AG04449 (cell line): ENCODE measurements at regions of chr1 and their contacts with region 1.

Region 1: DNA sequence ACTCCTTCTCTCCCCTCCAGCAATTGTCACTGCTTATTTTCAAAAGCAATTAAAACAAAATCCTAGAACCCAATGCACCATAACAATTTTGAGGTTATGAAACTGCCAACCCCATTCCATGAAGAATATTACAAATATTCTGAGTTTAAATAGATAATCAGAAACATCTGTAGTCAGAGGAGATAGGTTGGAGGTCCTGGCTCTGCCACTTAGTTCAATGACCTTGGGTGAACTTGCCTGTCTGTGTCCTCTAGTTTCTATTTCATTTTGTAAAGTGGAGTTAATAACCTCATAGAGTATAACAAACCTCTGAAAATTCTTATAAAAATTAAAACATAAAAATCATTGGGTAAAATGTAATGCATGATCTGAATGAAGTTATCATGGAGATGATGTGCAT is 164.6 kb downstream of the KCTD3 start:
- DNase-seq: no peak
- H3K4me3 ChIP-seq: no peak overlapping the region
- CTCF ChIP-seq: no peak

Region 2: DNA sequence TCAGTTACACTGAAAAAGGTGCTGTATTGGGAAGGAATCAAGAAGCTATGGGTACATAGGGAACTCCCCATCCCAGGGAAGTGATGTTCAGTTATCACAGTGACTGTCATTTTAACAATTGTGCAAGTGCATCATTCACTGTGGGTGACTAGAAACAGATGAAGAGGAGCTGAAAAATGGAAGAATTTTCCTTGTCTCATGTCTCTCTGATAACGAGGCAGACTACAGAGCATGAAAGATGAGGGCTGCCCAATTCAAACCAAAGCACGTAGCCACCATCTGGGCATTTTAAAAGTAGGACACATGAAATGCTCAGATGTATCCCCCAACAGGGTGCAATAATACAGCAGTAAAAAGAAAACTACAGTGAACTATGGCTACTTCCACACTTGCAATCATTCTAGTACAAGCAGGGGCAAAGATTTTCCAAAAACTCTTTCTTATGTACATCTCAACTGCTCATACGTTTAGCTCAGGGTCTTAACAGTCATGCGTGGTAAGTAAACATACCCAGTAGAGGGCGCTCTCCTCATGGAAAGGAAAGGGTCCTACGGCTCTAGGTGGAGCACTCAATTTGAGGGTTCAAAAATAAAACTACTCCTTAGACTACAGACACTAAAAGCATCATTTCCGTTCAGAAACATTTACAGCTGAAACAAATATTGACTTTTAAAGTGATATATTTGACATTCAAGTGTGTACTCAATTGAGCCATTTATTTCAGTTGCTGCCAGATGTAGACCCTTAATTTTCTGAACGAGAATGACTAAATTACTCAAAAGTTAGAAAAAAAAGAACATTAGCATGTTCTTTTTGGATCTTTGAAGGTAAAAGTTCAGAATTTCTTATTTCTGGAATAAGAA is 21.4 kb before region 1 on chr1:
- CTCF ChIA-PET with region 1: interaction called, 13 read pairs
- POLR2A ChIA-PET with region 1: no interaction called
- DNase-seq: no peak
- H3K4me3 ChIP-seq: no peak overlapping the region
- CTCF ChIP-seq: peak; percentile 59

Region 3: DNA sequence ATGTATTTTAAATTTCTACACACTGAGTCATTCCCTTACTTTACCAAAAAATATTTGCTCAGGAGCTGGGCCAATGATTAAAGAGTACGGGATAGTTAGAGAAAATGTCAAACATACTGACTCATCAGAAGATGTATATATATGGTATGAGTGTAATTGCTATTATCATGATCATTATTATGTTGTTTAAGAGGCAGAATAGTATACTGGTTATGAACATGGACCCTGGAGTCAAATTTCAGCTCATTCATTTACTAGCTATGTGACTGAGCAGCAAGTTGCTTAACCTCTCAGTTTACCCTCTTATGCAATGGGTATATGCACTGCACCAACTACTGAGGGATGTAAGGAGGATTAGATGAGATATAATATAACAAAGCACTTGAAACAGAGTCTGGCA is 732.8 kb after region 1 on chr1:
- CTCF ChIA-PET with region 1: no interaction called
- POLR2A ChIA-PET with region 1: no interaction called
- DNase-seq: peak; percentile 97
- H3K4me3 ChIP-seq: no peak overlapping the region
- CTCF ChIP-seq: no peak